Caco-2 (cell line): ENCODE measurements at regions of chr6 and their contacts with region 1.

Region 1: GRCh38 chr6:46781478-46782378 is 11.5 kb upstream of the MEP1A start:
- DNase-seq: peak; percentile 48 to 68
- H3K4me3 ChIP-seq: no peak overlapping the region
- H3K4me3 Mint-ChIP-seq: no peak overlapping the region
- H3K27ac Mint-ChIP-seq: no peak overlapping the region
- H3K4me1 ChIP-seq: no peaks in the 10 kb centered on the region
- H3K4me1 Mint-ChIP-seq: peaks cover 7% of the 10 kb centered on the region
- H3K27me3 ChIP-seq: no peaks in the 10 kb centered on the region
- H3K27me3 Mint-ChIP-seq: no peaks in the 10 kb centered on the region
- CTCF ChIP-seq: peak; percentile 66 to 67

Region 2: DNA sequence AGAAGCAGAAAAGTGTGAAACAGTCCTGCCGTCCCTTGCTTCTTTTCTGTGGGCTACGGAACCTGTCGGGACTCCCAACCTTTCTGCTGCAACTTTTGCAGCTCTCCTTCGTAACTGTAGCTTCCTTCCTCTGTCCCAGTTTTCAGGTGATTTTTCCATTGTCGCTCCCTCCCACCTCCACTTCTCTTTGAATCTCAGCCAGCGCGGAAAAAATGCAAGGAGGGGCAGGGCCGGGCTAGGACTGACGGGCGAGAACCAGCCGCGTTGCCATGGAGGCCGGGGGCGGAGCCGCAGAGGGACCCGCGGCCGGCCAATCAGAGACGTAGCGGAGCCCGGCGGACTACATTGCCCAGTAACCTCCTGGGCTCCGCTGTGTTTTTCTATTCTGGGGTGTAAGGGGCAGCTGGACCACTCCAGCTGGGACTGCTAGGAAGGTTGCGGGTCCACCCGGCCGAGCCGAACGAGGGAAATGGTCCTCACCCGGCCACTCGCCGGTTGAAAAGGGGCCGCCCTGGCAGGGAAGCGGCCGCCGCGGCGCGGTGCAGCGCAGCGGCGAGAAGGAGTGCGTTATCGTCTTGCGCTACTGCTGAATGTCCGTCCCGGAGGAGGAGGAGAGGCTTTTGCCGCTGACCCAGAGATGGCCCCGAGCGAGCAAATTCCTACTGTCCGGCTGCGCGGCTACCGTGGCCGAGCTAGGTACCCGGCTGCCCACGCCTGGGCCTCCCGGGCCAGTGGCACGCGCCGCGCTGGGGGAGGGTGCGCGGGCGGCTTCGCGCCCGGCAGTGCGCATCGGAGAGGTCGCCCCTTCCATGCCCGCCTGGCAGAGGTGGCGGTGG is 128.9 kb before region 1 on chr6 and contains the starts of genes CYP39A1 and SLC25A27:
- CTCF ChIA-PET with region 1: no interaction called
- POLR2A ChIA-PET with region 1: no interaction called
- intact Hi-C with region 1: loop called (anchors 5 kb)
- DNase-seq: peak; percentile 87 to 90
- H3K4me3 ChIP-seq: peak within 1 kb of the TSS; percentile 78
- H3K4me3 Mint-ChIP-seq: peak within 1 kb of the TSS; percentile 88
- H3K27ac Mint-ChIP-seq: peak within 1 kb of the TSS; percentile 64
- H3K4me1 ChIP-seq: peaks cover 7% of the 10 kb centered on the region; the same call in 1 of the 2 replicates
- H3K4me1 Mint-ChIP-seq: peaks cover 5% of the 10 kb centered on the region
- H3K27me3 ChIP-seq: no peaks in the 10 kb centered on the region
- H3K27me3 Mint-ChIP-seq: peaks cover 17% of the 10 kb centered on the region
- CTCF ChIP-seq: no peak
- total RNA-seq, gene CYP39A1: not detected in 2 replicates
- total RNA-seq, gene SLC25A27: 0.64 TPM in 1 of 2 replicates, not detected in the other

Region 3: GRCh38 chr6:46734867-46735719 is 46.6 kb before region 1 on chr6 and contains the start of gene PLA2G7:
- CTCF ChIA-PET with region 1: no interaction called
- POLR2A ChIA-PET with region 1: no interaction called
- intact Hi-C with region 1: loop called (anchors 1 kb)
- DNase-seq: peak; percentile 24 to 39
- H3K4me3 ChIP-seq: peak within 1 kb of the TSS; percentile 38
- H3K4me3 Mint-ChIP-seq: peak within 1 kb of the TSS; percentile 66
- H3K27ac Mint-ChIP-seq: peak within 1 kb of the TSS; percentile 2
- H3K4me1 ChIP-seq: 0 out of 2 replicates have a peak, but pooled peaks cover 4% of the 10 kb centered on the region
- H3K4me1 Mint-ChIP-seq: peaks cover 7% of the 10 kb centered on the region
- H3K27me3 ChIP-seq: peaks cover 1% of the 10 kb centered on the region; the same call in 1 of the 2 replicates
- H3K27me3 Mint-ChIP-seq: peaks cover 14% of the 10 kb centered on the region
- CTCF ChIP-seq: no peak
- total RNA-seq, gene PLA2G7: 0.19 and 0.32 TPM in 2 replicates

Region 4: DNA sequence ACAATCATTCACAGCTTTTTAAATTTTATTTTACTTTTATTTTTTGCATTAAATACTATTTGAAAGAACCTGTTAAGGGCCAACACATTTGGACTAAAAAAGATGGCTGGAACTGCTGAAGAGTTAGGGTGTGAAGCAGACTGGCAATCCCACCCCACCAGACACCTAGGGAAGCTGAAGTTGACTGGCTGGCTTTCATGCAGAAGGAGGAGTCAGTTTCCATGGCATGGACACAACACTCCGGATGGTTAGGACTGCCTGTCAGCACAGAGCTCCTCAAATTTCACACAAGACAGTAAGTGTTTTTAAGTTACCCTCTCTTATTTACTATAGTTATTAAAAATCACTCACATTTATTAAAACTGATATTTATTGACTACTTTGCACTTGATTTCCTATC is 35.0 kb before region 1 on chr6 and contains the start of gene ANKRD66:
- CTCF ChIA-PET with region 1: no interaction called
- POLR2A ChIA-PET with region 1: no interaction called
- intact Hi-C with region 1: no loop called
- DNase-seq: no peak
- H3K4me3 ChIP-seq: no peak within 1 kb of the TSS
- H3K4me3 Mint-ChIP-seq: no peak within 1 kb of the TSS
- H3K27ac Mint-ChIP-seq: no peak within 1 kb of the TSS
- H3K4me1 ChIP-seq: no peaks in the 10 kb centered on the region
- H3K4me1 Mint-ChIP-seq: no peaks in the 10 kb centered on the region
- H3K27me3 ChIP-seq: no peaks in the 10 kb centered on the region
- H3K27me3 Mint-ChIP-seq: peaks cover 9% of the 10 kb centered on the region
- CTCF ChIP-seq: no peak
- total RNA-seq, gene ANKRD66: not detected in 2 replicates

Region 5: GRCh38 chr6:46760925-46761324 is 20.8 kb before region 1 on chr6:
- CTCF ChIA-PET with region 1: no interaction called
- POLR2A ChIA-PET with region 1: no interaction called
- intact Hi-C with region 1: no loop called
- DNase-seq: peak in 1 of 2 experiments; percentile 15
- H3K4me3 ChIP-seq: no peak overlapping the region
- H3K4me3 Mint-ChIP-seq: no peak overlapping the region
- H3K27ac Mint-ChIP-seq: no peak overlapping the region
- H3K4me1 ChIP-seq: no peaks in the 10 kb centered on the region
- H3K4me1 Mint-ChIP-seq: peaks cover 6% of the 10 kb centered on the region
- H3K27me3 ChIP-seq: no peaks in the 10 kb centered on the region
- H3K27me3 Mint-ChIP-seq: no peaks in the 10 kb centered on the region
- CTCF ChIP-seq: no peak